Gastrocnemius medialis (tissue), 4 donors: ENCODE measurements at regions of chr9 and their contacts with region 1.

Region 1: GRCh38 chr9:113564498-113565237 is 101.1 kb downstream of the RGS3 start:
- DNase-seq: peak in 1 of 2 donors; percentile 45
- ATAC-seq: peak in 1 of 2 donors; percentile 26
- H3K4me3 ChIP-seq: peak overlapping the region; percentile 43 to 52 (median 48)
- H3K27ac ChIP-seq: peak overlapping the region; percentile 77 to 85 (median 79)
- H3K4me1 ChIP-seq: peaks cover 57 to 58% of the 10 kb centered on the region in 2 donors
- H3K27me3 ChIP-seq: no peaks in the 10 kb centered on the region
- CTCF ChIP-seq: no peak
- POLR2A ChIP-seq: no peak

Region 2: GRCh38 chr9:113463418-113464285 is 101.0 kb before region 1 on chr9 and contains the start of gene RGS3:
- in situ Hi-C with region 1: no loop called
- intact Hi-C with region 1: loop called (anchors 5 kb)
- DNase-seq: peak; percentile 60 to 79
- ATAC-seq: peak; percentile 89 to 91
- H3K4me3 ChIP-seq: peak within 1 kb of the TSS; percentile 44 to 69 (median 59)
- H3K27ac ChIP-seq: peak within 1 kb of the TSS; percentile 74 to 87 (median 82)
- H3K4me1 ChIP-seq: peaks cover 11 to 32% of the 10 kb centered on the region in 2 donors
- H3K27me3 ChIP-seq: no peaks in the 10 kb centered on the region
- CTCF ChIP-seq: peak in 2 of 5 experiments; percentile 10 to 31
- POLR2A ChIP-seq: peak; percentile 34 to 35
- total RNA-seq, gene RGS3: 5.9 to 11.8 (median 9.8) TPM